Heart right ventricle (tissue), 16 donors: ENCODE measurements at regions of chr18 and their contacts with region 1.

Region 1: GRCh38 chr18:46073474-46074331 is 1.6 kb upstream of the PSTPIP2 start:
- DNase-seq: peak in 1 of 2 donors; percentile 64
- ATAC-seq: peak in 6 of 8 donors; percentile 3 to 55 (median 42)
- H3K4me3 ChIP-seq: no peak overlapping the region
- H3K27ac ChIP-seq: no peak overlapping the region
- H3K4me1 ChIP-seq: peaks cover 3 to 45% (median 27%) of the 10 kb centered on the region in 9 donors
- H3K27me3 ChIP-seq: no peaks in the 10 kb centered on the region
- CTCF ChIP-seq: peak; percentile 32 to 76 (median 68)

Region 2: GRCh38 chr18:45664824-45665763 is 408.6 kb before region 1 on chr18:
- intact Hi-C with region 1: loop called in 6 of 10 experiments (anchors 5 to 10 kb)
- DNase-seq: peak in 1 of 2 donors; percentile 46
- ATAC-seq: peak; percentile 47 to 82 (median 72)
- H3K4me3 ChIP-seq: no peak overlapping the region
- H3K27ac ChIP-seq: peak overlapping the region in 3 of 10 donors; percentile 9 to 61 (median 13)
- H3K4me1 ChIP-seq: peaks cover 0 to 35% (median 19%) of the 10 kb centered on the region in 9 donors
- H3K27me3 ChIP-seq: no peaks in the 10 kb centered on the region
- CTCF ChIP-seq: peak; percentile 86 to 97 (median 93)

Region 3: GRCh38 chr18:45879681-45880655 is 193.7 kb before region 1 on chr18:
- intact Hi-C with region 1: loop called in 1 of 10 experiments (anchors 10 kb)
- DNase-seq: peak; percentile 49 to 77
- ATAC-seq: peak; percentile 81 to 97 (median 94)
- H3K4me3 ChIP-seq: no peak overlapping the region
- H3K27ac ChIP-seq: peak overlapping the region in 1 of 10 donors; percentile 12
- H3K4me1 ChIP-seq: peaks cover 0 to 9% (median 3%) of the 10 kb centered on the region in 9 donors
- H3K27me3 ChIP-seq: no peaks in the 10 kb centered on the region
- CTCF ChIP-seq: peak; percentile 98 to 100 (median 99)

Region 4: DNA sequence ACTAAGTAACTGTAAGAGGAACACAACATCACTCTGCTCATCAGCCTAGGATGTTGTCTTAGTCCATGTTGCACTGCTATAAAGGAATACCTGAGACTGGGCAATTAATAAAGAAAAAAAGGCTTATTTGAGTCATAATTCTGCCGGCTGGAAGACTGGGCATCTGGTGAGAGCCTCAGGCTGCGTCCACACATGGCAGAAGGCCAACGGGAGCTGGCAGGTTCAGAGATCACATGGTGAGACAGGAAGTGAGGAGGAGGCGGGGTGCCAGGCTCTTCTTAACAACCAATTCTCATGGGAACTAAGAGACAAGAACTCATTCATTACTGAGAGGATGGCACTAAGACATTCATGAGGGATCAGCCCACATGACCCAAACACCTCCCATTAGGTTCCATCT is 153.3 kb before region 1 on chr18:
- intact Hi-C with region 1: loop called in 3 of 10 experiments (anchors 10 kb)
- DNase-seq: peak; percentile 83 to 84
- ATAC-seq: peak; percentile 65 to 97 (median 92)
- H3K4me3 ChIP-seq: no peak overlapping the region
- H3K27ac ChIP-seq: peak overlapping the region in 1 of 10 donors; percentile 8
- H3K4me1 ChIP-seq: peaks cover 0 to 17% (median 12%) of the 10 kb centered on the region in 9 donors
- H3K27me3 ChIP-seq: no peaks in the 10 kb centered on the region
- CTCF ChIP-seq: no peak

Region 5: GRCh38 chr18:45967007-45967706 is 106.5 kb before region 1 on chr18 and contains the start of gene EPG5:
- intact Hi-C with region 1: loop called in 5 of 10 experiments (anchors 5 to 10 kb)
- DNase-seq: peak; percentile 94 to 96
- ATAC-seq: peak; percentile 99 to 100 (median 100)
- H3K4me3 ChIP-seq: peak within 1 kb of the TSS; percentile 54 to 99 (median 82)
- H3K27ac ChIP-seq: peak within 1 kb of the TSS in 9 of 10 donors; percentile 57 to 83 (median 71)
- H3K4me1 ChIP-seq: peaks cover 0 to 40% (median 29%) of the 10 kb centered on the region in 9 donors
- H3K27me3 ChIP-seq: no peaks in the 10 kb centered on the region
- CTCF ChIP-seq: no peak
- total RNA-seq, gene EPG5: 16.7 to 26.3 (median 21.0) TPM

Region 6: DNA sequence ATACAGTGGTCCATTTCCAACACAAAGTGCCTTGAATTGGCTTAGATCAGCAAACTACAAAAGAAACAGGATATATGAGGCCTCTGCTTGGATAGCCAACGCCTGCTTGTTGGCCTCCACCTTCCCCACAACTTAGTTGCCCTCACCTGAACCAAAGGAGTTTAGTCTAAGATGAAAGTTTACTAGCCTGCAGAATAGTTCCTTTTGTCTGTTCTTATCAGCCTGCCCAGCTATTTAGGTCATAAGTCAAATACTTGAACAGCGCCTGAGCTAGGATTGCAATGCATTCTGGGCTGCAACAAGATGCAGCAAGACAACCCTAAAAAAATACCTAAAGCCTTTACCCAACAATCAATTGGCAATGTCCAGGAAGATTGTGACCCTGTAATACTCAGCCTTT is 93.5 kb before region 1 on chr18:
- intact Hi-C with region 1: loop called in 3 of 10 experiments (anchors 5 to 10 kb)
- DNase-seq: no peak
- ATAC-seq: no peak
- H3K4me3 ChIP-seq: no peak overlapping the region
- H3K27ac ChIP-seq: no peak overlapping the region
- H3K4me1 ChIP-seq: peaks cover 0 to 23% (median 0%) of the 10 kb centered on the region in 9 donors
- H3K27me3 ChIP-seq: no peaks in the 10 kb centered on the region
- CTCF ChIP-seq: no peak